ENCODE measurements at regions of chr7 and their contacts with region 1.

Region 1: DNA sequence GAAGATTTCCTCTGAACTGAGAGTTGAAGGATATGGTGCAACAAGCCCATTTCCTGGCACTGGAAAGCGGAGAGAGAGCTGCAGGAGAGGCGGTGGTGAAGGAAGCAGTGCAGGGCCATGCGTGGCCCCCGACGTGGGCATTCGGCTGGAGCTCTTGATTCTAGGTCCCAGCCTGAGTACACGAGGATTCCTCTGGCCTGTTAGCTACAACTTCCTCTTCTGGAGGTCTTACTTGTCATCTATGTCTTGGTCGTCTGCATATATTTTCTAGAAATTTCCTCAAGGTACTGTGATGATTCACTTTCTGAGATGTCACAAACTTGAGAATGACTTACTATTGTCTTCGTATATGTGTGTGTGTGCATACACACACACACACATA is 59.2 kb upstream of the JAZF1 start:
- DNase-seq: no peak
- H3K4me3 Mint-ChIP-seq: peak overlapping the region; percentile 24
- H3K27ac Mint-ChIP-seq: no peak overlapping the region
- H3K4me1 Mint-ChIP-seq: peaks cover 6% of the 10 kb centered on the region
- H3K27me3 Mint-ChIP-seq: peaks cover 46% of the 10 kb centered on the region

Region 2: DNA sequence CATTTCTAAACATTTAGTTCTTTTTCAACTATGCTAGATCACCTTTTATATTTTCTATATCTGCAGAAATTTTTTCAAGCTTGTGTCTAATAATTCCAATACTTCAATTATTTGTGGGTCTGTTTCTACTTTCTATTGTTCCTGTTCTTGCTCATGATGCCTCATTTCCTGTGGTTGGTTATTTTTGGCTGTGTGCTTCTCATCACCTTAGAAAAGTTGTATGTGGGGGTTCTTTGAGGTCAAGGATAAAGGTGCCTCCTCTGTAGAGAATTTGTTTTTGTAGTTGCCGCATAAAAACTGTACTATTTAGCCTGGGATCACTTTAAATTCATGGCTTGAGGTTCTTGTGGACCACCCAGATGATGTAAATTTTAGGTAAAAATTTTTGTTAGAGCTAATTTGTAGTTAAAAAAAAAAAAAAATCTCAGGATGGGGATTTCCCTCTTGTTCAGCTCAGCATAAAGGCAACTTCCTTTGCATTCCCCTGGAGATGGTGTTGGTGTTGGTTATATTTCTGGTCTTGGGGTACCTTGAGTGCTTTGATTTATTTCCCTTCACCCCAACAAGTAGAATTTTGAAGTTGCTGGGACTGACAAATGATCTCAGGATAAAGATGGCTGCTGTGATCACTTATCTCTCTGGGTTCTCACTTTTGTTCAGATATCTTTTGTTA is 32.2 kb before region 1 on chr7:
- intact Hi-C with region 1: loop called (anchors 2 kb)
- DNase-seq: peak; percentile 53
- H3K4me3 Mint-ChIP-seq: no peak overlapping the region
- H3K27ac Mint-ChIP-seq: no peak overlapping the region
- H3K4me1 Mint-ChIP-seq: peaks cover 15% of the 10 kb centered on the region
- H3K27me3 Mint-ChIP-seq: peaks cover 7% of the 10 kb centered on the region

Region 3: DNA sequence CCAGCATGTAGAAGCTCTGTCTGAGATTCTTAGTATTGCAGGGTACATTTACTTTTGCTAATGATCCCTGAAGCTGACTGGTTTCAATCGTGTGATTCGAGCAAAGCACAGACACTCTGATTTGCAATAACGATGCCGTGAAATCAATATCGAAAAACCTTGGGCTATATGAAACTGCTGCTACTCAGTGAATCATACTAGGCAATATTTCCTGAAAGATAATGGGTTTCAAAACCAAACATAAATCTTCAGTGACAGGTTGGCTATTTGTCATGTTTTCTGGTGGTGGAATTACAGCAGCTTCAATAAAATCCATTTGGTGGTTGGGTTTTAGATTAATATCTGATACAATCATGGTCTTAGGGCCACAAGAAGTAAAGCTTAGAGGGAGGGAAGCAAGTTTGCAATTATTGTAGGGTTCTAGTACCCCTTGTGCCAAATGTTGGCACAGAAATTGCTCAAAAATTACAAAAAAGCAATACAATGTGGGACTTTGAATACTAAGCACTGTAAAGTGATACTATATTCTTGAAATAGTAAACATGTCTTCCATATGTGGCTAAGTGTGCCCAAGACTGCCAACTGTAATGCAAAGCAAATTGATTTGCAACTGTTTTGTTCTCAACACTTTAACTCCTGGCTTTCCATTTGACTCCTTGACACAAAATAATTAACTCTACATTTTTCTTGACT is 53.2 kb after region 1 on chr7:
- intact Hi-C with region 1: loop called (anchors 1 kb)
- DNase-seq: no peak
- H3K4me3 Mint-ChIP-seq: no peak overlapping the region
- H3K27ac Mint-ChIP-seq: no peak overlapping the region
- H3K4me1 Mint-ChIP-seq: peaks cover 8% of the 10 kb centered on the region
- H3K27me3 Mint-ChIP-seq: peaks cover 34% of the 10 kb centered on the region